Activated CD4-positive, alpha-beta memory T cell treated with anti-CD3 and anti-CD28 coated beads, Interleukin-2, amount 10 ng/mL, durations not matched to agents 7 days and 5 days (primary cell): ENCODE measurements at regions of chr1 and their contacts with region 1.

Region 1: DNA sequence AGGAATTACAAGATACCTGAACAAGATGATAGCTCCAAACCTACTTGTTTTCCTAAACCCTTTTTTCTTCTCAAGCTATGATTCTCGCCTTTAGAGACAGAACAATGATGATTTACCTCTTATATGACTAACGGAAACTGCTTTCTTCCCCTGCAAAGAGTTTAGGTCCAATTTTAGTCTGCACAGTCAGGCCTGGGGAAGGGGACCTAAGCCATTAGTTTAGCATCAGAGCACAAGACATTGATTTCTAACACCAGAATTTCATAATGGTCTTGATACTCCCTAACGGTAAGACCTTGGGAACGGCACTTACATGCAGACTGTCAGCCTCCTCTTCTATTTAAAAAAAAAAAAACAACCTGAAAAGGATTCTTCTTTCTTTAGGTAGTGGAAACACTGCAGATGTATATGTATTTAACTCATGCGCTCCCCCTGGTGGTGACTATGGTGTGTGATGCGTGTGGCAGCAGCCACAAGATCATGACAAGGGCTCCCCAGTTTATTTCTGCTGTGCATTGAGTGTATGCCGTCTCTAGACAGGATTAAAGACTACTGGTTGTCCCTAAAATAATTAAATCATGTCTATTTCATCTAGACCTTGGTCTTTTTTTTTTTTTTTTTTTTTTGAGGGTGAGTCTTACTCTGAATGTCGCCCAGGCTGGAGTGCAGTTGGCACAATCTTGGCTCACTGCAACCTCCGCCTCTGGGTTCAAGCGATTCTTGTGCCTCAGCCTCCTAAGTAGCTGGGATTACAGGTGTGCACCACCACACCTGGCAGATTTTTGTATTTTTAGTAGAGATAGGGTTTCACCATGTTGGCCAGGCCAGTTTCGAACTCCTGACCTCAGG is 37.3 kb upstream of the TMEM222 start:
- DNase-seq: peak; percentile 88
- H3K4me3 Mint-ChIP-seq: no peak overlapping the region
- H3K27ac Mint-ChIP-seq: no peak overlapping the region
- H3K4me1 Mint-ChIP-seq: no peaks in the 10 kb centered on the region
- H3K27me3 Mint-ChIP-seq: no peaks in the 10 kb centered on the region

Region 2: GRCh38 chr1:27102707-27103491 is 181.8 kb before region 1 on chr1:
- CTCF ChIA-PET with region 1: interaction called, 35 read pairs
- POLR2A ChIA-PET with region 1: no interaction called
- DNase-seq: peak; percentile 82
- H3K4me3 Mint-ChIP-seq: no peak overlapping the region
- H3K27ac Mint-ChIP-seq: no peak overlapping the region
- H3K4me1 Mint-ChIP-seq: peaks cover 9% of the 10 kb centered on the region
- H3K27me3 Mint-ChIP-seq: no peaks in the 10 kb centered on the region

Region 3: DNA sequence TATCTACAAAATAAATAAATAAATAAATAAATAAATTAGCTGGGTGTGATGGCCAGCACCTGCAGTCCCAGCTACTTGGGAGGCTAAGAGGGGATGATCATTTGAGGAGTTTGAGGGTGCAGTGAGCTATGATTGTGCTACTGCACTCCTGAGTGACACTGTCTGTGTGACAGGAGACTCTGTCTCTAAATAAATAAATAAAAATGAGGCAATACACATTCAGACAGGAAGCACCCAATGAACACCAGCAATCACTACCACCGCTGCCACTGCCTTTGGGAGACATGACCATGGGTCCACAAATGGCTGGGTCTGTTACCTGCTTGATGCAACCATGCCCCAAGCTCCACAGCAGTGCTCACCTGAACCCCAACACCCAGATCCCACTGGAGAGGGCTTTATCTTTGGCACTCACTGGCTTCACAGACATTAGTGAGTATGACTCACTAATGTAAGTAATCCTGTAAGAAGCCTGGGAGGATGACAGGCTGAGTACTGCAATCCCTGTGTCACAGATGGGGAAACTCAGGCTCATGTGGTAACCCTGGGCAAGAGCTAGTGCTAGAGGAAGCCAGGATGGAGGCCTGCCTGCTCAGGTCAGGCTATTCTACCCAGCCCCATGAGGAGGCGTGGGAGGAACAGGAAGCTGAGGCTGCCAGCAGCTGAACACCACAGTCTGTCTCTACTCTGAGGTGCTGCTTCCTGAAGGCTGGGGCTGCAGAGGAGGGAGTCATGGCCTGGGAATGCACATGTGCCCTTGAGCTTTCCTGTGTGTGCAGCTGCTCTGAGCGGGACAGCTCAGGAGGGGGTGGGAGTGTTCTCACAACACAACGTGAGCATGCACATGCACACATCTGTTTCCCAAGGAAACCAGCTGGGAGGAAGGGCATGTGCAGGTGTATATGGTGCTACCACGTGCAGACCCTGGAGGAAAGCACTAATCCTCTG is 172.7 kb before region 1 on chr1:
- CTCF ChIA-PET with region 1: interaction called, 14 read pairs
- POLR2A ChIA-PET with region 1: interaction called, 4 read pairs
- DNase-seq: peak; percentile 79
- H3K4me3 Mint-ChIP-seq: no peak overlapping the region
- H3K27ac Mint-ChIP-seq: peak overlapping the region; percentile 70
- H3K4me1 Mint-ChIP-seq: peaks cover 43% of the 10 kb centered on the region
- H3K27me3 Mint-ChIP-seq: no peaks in the 10 kb centered on the region

Region 4: GRCh38 chr1:27192039-27192529 is 92.6 kb before region 1 on chr1:
- CTCF ChIA-PET with region 1: interaction called, 18 read pairs
- POLR2A ChIA-PET with region 1: no interaction called
- DNase-seq: no peak
- H3K4me3 Mint-ChIP-seq: no peak overlapping the region
- H3K27ac Mint-ChIP-seq: no peak overlapping the region
- H3K4me1 Mint-ChIP-seq: no peaks in the 10 kb centered on the region
- H3K27me3 Mint-ChIP-seq: peaks cover 10% of the 10 kb centered on the region